Ovary (tissue), 10 donors: ENCODE measurements at regions of chr9 and their contacts with region 1.

Region 1: DNA sequence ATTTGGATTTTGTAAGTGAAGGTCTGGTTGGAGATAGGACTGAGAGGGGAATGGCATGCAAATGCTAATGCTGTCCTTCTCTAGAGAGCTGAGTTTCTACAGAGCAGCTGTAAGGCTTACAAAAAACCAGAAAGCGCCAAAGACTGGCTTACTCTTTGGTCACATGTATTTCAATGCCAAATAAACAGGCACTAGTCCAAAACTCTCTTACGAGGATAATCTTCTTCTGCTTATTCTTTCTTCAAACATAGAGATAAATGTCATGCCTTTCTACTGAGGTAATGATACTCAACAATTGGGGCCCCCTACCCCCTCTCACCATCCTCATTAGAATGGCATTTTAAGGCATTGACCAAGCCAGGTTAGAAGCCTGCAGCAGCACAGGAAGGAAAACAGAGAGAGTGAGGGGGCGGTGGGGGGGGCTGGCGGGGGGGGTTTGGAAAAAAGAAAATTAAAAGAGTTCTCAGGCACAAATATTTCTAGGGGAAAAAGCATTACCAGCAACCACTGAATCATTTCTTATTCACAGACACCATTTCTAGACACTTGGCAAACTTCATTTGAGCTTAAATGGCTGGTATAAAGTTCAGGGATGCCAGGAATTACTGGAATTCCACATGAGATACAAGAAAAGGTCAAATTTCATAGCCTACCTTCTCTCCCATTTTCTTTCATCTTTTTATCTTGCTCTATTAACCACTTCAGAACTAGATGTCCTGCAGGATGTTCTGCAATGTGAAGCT is 34.0 kb downstream of the PUM3 start:
- DNase-seq: peak in 4 of 5 donors; percentile 41 to 57 (median 46)
- H3K4me3 ChIP-seq: no peak overlapping the region
- H3K27ac ChIP-seq: peak overlapping the region in 1 of 2 donors; percentile 75
- H3K4me1 ChIP-seq: peaks cover 14% of the 10 kb centered on the region
- H3K27me3 ChIP-seq: no peaks in the 10 kb centered on the region
- CTCF ChIP-seq: no peak
- EP300 ChIP-seq: no peak
- POLR2A ChIP-seq: no peak

Region 2: GRCh38 chr9:2125906-2126305 is 684.0 kb before region 1 on chr9:
- intact Hi-C with region 1: loop called in 2 of 4 experiments (anchors 10 kb)
- DNase-seq: no peak
- H3K4me3 ChIP-seq: peak overlapping the region; percentile 3
- H3K27ac ChIP-seq: peak overlapping the region; percentile 36 to 91
- H3K4me1 ChIP-seq: peaks cover 29% of the 10 kb centered on the region
- H3K27me3 ChIP-seq: no peaks in the 10 kb centered on the region
- CTCF ChIP-seq: no peak
- EP300 ChIP-seq: no peak
- POLR2A ChIP-seq: no peak

Region 3: DNA sequence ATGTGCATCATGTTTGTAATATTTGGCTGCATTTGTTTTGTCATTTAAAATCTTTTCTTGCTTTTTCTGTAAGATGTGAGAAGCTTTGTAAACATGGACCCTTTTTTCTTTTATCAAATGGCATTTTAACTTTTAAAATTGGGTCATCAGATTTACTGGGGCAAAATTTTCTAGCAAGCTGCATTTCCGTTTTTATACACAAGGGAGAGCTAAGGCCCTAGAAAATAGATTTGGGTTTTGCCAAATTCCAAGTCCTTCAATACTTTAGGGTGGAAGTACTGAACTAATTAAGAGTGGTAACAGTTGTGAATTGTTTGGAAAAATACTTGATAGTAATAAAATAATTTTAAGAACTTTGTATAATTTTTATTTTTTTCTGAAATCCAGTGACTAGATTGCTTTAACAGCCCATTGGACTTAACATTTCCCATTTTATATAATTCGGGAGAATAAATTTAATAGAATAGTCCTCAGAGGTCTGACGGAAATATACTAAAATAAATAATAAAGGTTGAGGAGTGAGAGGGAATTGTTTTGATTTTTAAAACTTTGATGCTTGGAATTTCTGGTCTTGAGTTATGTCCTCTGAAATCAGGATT is 677.3 kb before region 1 on chr9:
- intact Hi-C with region 1: loop called in 2 of 4 experiments (anchors 10 kb)
- DNase-seq: no peak
- H3K4me3 ChIP-seq: no peak overlapping the region
- H3K27ac ChIP-seq: no peak overlapping the region
- H3K4me1 ChIP-seq: peaks cover 12% of the 10 kb centered on the region
- H3K27me3 ChIP-seq: no peaks in the 10 kb centered on the region
- CTCF ChIP-seq: peak; percentile 51 to 93 (median 82)
- EP300 ChIP-seq: no peak
- POLR2A ChIP-seq: no peak

Region 4: GRCh38 chr9:2638871-2639673 is 170.8 kb before region 1 on chr9:
- intact Hi-C with region 1: no loop called
- DNase-seq: no peak
- H3K4me3 ChIP-seq: no peak overlapping the region
- H3K27ac ChIP-seq: peak overlapping the region in 1 of 2 donors; percentile 46
- H3K4me1 ChIP-seq: peaks cover 10% of the 10 kb centered on the region
- H3K27me3 ChIP-seq: no peaks in the 10 kb centered on the region
- CTCF ChIP-seq: no peak
- EP300 ChIP-seq: no peak
- POLR2A ChIP-seq: no peak

Region 5: DNA sequence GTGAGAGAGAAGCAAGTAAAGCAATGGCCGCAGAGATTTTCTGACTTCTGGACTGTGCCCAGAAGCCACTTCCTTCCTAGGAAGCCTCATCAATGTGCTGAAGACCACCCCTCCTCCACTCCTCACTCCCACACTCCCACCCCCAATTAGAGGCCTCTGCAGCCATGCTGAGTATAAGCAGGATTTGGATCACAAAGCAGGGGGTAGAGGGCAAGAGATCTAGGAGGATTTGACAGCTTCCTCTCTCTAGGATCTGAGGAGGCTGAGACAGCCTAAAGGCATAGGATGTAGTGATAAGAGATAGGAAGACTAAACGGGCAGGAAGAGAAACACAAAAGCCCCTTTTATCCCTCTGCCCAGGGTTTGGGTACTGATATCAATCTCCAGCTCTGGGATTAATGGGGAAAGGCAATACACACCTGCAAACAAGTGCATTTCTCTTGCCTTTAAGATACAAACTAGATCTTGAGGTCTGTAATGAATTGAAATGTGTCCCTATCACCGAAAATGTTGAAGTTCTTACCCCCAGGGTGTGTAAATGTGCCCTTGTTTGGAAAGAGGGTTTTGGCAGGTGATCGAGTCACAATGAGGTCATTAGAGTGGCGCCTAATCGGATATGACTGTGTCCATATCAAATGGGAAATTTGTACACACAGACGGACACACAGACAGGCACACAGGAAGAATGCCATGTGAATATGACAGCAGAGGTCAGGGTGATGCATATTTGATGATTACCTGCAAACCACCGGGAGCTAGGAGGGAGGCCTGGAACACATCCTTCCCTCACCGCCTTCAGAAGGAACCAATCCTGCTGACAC is 64.1 kb before region 1 on chr9:
- intact Hi-C with region 1: loop called in 1 of 4 experiments (anchors 10 kb)
- DNase-seq: no peak
- H3K4me3 ChIP-seq: no peak overlapping the region
- H3K27ac ChIP-seq: no peak overlapping the region
- H3K4me1 ChIP-seq: peaks cover 3% of the 10 kb centered on the region
- H3K27me3 ChIP-seq: no peaks in the 10 kb centered on the region
- CTCF ChIP-seq: no peak
- EP300 ChIP-seq: no peak
- POLR2A ChIP-seq: no peak